Ovary (tissue), 10 donors: ENCODE measurements at regions of chr5 and their contacts with region 1.

Region 1: DNA sequence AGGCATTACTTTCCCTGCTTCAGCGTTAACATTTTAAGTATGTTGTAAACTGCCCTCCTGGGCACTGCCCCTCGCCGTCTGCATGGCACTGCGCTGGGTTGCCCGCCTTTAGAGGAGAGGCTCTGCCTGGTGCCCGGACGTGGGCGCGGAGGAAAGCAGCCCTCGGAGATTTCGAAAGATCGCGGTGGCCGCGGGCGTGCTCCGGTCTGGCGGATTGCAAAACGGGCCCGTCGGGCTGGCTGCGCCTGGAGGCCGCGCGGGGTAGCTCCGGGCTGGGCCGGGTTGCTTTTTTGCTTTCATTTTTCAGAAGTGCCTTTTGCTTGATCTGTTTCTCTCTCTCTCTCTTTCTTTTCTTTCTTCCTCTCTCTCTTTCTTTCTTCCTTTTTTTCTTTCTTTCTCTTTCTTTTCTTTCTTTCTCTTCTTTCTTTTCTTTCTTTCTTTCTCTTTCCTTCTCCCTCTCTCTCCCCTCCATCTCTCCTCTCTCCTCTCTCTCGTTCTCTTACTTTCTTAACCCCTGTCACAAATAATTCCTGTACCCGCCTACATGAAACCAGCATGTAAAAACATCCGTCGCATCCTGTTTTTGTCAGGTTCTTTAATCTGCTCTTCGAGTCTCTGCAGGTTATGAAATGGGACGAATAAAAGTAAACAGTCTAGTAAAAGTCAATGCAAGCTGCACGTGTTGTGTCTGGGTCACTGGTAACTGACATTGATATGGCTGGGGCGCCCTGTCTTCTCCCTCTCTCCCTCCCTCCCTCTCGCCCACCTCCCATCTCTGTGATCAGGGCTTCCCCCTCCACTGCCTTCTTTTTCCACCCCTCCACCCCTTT is 1.7 kb downstream of the FST start:
- DNase-seq: peak; percentile 51 to 77 (median 66)
- H3K4me3 ChIP-seq: peak overlapping the region; percentile 52
- H3K27ac ChIP-seq: no peak overlapping the region
- H3K4me1 ChIP-seq: peaks cover 2% of the 10 kb centered on the region
- H3K27me3 ChIP-seq: no peaks in the 10 kb centered on the region
- CTCF ChIP-seq: peak in 2 of 3 donors; percentile 14 to 32
- EP300 ChIP-seq: no peak
- POLR2A ChIP-seq: no peak

Region 2: GRCh38 chr5:53543401-53543800 is 61.3 kb after region 1 on chr5:
- intact Hi-C with region 1: no loop called
- DNase-seq: no peak
- H3K4me3 ChIP-seq: no peak overlapping the region
- H3K27ac ChIP-seq: no peak overlapping the region
- H3K4me1 ChIP-seq: no peaks in the 10 kb centered on the region
- H3K27me3 ChIP-seq: peaks cover 4% of the 10 kb centered on the region
- CTCF ChIP-seq: no peak
- EP300 ChIP-seq: no peak
- POLR2A ChIP-seq: no peak

Region 3: DNA sequence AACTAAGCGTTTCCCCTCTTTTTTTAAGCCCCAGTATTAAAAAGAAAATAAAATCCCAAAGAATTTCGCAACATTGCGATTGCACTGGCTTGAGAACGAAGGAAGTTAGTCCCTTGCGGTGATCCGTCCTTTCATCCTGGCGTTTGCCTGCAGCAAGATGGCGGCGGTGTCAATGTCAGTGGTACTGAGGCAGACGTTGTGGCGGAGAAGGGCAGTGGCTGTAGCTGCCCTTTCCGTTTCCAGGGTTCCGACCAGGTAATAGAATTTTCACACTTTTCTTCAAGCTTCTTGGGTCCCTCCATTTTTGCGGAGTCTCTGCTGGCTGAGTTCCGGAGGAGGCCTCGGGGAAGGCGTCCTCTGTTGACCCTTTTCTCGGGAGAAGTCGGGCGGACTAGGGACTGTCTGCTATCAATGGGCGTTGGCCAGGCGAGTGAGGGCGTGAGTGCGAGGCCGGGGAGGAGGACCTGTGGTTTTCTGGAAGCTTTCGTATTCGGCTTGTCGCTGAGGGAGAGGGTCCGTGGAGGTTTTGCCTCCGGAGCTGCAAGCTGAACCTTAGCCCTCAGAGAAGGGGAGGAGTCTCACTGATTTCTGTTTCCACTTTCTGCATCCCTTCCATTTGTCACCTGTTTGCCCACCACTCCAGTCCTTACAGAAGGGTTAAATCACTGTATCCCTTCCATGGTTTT is 78.5 kb after region 1 on chr5 and contains the start of gene NDUFS4:
- intact Hi-C with region 1: loop called in 1 of 4 experiments (anchors 10 kb)
- DNase-seq: peak; percentile 84 to 90 (median 85)
- H3K4me3 ChIP-seq: peak within 1 kb of the TSS; percentile 83
- H3K27ac ChIP-seq: peak within 1 kb of the TSS; percentile 67 to 77
- H3K4me1 ChIP-seq: peaks cover 4% of the 10 kb centered on the region
- H3K27me3 ChIP-seq: no peaks in the 10 kb centered on the region
- CTCF ChIP-seq: no peak
- EP300 ChIP-seq: no peak
- POLR2A ChIP-seq: peak; percentile 51
- total RNA-seq, gene NDUFS4: 75.1 to 104 (median 87.5) TPM

Region 4: DNA sequence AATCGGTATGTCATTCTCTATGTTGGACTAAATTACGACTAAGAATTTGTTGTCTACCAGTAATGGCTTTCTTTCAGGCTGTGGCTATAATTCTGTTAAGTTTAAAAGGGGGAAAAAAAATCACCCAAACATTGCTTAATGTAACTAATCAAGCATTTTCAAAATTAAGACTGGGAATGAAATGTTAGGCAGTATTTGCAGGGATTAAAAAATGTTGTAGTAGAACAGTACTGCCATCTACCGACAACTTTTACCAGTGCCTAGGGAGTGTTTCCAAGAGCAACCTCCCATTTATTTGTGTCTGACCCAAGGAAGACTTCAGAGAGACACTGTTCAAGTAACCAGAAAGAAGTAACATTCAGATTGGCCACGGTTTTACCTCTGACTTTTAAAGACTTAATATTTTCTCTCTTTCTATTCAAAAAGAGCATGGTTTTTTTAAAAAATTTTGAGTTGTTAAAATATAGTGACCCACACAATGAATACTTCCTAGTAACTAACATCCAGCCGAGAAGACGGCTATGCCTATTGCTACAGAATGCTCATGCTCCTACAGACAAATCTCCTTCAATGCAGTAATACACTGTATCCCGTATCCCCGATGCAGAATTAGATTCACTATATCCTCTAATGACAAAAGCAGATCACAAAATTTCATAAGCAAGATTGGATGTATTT is 735.9 kb after region 1 on chr5:
- intact Hi-C with region 1: loop called in 3 of 4 experiments (anchors 5 to 10 kb)
- DNase-seq: peak in 2 of 5 donors; percentile 14 to 45
- H3K4me3 ChIP-seq: no peak overlapping the region
- H3K27ac ChIP-seq: no peak overlapping the region
- H3K4me1 ChIP-seq: no peaks in the 10 kb centered on the region
- H3K27me3 ChIP-seq: no peaks in the 10 kb centered on the region
- CTCF ChIP-seq: peak; percentile 35 to 64 (median 53)
- EP300 ChIP-seq: no peak
- POLR2A ChIP-seq: no peak

Region 5: DNA sequence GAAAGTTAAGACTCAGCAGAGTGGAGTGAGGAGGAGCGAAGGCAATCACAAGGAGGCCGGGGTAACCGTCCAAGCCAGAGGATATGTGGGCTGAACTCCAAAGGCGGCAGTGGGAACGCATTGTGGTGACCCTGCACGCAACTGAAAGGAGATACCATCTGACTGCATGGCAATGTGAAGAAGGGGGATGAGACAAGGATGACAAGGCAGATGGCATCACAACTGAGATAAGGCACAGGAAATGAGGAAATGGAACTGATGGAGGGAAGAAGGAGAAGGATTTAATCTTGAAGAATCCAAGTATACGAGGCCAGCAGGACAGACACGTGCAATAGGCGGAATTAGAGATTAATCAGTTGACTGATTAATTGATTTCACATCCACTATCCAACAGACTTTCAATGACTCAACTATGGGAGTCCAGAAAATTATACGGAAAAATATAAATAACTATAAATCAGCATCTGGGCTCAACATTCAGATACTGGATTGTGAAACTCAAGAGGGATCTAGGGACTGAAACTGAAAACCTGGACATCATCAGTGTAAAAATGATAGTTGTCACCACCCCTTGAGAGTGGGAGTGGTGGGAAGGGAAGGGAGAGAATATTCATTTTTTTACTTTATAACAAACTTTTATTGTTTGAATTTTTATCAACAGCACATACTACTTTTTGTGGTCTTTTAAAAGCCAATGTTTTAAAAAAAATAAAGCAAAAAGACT is 742.2 kb after region 1 on chr5:
- intact Hi-C with region 1: loop called in 3 of 4 experiments (anchors 5 to 10 kb)
- DNase-seq: no peak
- H3K4me3 ChIP-seq: no peak overlapping the region
- H3K27ac ChIP-seq: no peak overlapping the region
- H3K4me1 ChIP-seq: no peaks in the 10 kb centered on the region
- H3K27me3 ChIP-seq: no peaks in the 10 kb centered on the region
- CTCF ChIP-seq: no peak
- EP300 ChIP-seq: no peak
- POLR2A ChIP-seq: no peak